Right lobe of liver (tissue), 6 donors: ENCODE measurements at regions of chr12 and their contacts with region 1.

Region 1: GRCh38 chr12:14845350-14845750 is 2.0 kb upstream of the ART4 start:
- DNase-seq: no peak
- ATAC-seq: peak in 3 of 4 donors; percentile 10 to 44 (median 25)
- H3K4me3 ChIP-seq: no peak overlapping the region
- H3K27ac ChIP-seq: no peak overlapping the region
- H3K4me1 ChIP-seq: peaks cover 0 to 22% (median 2%) of the 10 kb centered on the region in 4 donors
- H3K27me3 ChIP-seq: no peaks in the 10 kb centered on the region
- CTCF ChIP-seq: peak; percentile 63 to 82 (median 70)
- POLR2A ChIP-seq: no peak

Region 2: DNA sequence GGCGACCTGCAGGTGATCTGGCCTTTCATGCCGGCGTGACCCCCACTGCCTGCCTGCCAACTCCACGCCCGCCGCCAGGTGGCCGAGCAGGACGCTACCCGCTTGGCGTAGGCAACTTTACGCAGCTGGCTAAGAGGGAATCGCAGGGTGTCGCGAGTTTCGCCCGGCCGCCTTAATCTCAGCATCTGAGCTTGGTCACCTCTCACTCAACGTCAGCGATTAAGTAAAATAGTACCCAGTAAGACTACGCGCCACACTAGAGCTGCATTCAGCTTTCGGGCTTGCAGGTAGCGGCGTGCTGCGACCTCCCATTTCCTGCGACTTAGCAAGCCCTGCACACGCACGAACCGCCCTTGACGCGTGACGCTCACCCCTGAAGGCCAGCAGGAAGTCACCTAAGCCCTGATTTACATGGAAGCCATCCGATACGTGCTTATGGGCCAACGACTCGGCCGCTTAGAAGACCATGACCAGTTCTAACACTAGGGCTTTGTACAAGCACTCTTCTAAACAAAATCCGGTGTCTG is 75.3 kb before region 1 on chr12:
- intact Hi-C with region 1: loop called in 1 of 2 experiments (anchors 5 kb)
- DNase-seq: peak; percentile 89 to 91 (median 89)
- ATAC-seq: peak; percentile 69 to 75 (median 72)
- H3K4me3 ChIP-seq: peak overlapping the region; percentile 65 to 91 (median 78)
- H3K27ac ChIP-seq: peak overlapping the region; percentile 91 to 98 (median 97)
- H3K4me1 ChIP-seq: peaks cover 0 to 29% (median 5%) of the 10 kb centered on the region in 4 donors
- H3K27me3 ChIP-seq: no peaks in the 10 kb centered on the region
- CTCF ChIP-seq: peak; percentile 63 to 94 (median 72)
- POLR2A ChIP-seq: peak; percentile 70

Region 3: DNA sequence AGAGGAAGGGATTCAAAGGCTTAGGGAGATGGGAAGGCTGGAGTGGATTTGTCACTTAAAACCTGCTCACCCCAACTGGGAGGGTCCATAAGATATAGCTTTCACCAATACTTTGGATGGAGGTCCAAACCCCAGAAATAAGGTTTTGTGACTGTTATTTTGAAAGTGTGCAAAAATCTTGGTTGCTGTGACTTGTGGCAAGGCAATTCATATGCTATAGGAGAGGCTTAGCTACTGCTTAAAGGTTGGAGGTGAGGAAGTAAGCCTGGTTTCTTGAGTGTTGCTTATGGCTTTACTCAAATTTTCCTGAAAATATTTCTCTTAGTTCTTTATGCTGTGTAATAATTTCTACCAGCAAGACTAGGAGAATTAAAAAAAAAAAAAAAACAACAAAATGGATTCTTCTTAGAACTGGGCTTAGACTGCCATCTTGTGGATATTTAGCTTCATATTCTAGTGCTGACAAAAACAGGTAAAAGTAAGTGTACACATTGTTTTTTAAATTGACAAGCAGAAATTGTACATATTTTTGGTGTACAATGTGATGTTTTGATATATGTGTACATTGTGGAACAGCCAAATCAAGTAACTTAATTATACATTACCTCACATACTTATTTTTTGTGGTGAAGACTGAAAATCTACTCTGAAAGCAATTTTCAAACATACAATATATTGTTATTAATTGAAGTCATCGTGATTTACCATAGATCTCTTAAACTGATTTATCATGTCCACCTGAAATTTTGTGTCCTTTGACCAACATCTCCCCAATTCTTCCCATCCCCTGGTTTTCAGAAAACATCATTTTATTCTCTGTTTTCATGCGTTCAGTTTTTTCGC is 150.5 kb after region 1 on chr12:
- intact Hi-C with region 1: loop called (anchors 10 kb)
- DNase-seq: no peak
- ATAC-seq: peak; percentile 73 to 82 (median 81)
- H3K4me3 ChIP-seq: no peak overlapping the region
- H3K27ac ChIP-seq: no peak overlapping the region
- H3K4me1 ChIP-seq: no peaks in the 10 kb centered on the region
- H3K27me3 ChIP-seq: no peaks in the 10 kb centered on the region
- CTCF ChIP-seq: peak; percentile 66 to 70 (median 68)
- POLR2A ChIP-seq: no peak